Pancreas (tissue), 10 donors: ENCODE measurements at regions of chr12 and their contacts with region 1.

Region 1: DNA sequence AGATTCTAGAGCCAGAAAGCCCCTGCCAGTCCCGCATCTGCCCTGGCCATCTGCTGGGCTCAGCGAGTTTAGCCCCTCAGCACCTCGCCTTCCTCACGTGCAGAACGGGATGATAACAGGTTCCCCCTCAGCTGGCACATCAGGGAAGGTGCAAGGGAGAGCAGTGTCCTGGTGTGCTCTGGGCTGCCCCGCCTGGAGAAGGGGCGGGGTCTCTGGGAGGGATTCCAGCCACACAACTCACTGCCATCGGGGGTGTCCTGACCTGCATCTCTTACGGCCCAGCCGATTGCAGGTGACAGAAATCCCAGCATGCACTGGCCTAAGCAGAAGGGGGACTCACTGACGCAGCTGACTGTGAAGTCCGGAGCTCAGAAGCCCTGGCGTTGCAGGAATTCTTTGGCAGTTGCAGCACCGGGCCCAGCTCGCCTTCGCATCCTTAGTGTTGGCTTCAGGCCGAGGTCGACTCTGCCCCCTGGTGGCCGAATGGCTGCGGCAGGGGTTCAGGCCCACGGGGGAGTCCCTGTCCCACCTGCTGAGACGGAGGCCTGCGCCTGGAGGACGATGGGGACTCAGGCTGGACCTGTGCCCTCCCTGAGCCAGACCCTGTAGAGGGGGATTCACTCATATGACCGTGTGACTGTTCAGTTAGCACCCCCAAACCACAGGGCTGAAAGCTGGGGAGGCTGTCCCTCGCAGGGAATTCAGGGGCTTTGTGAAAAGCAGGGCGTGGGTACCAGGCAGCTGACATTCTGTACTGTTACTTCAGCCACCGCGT is 178.6 kb downstream of the ADGRD1 start:
- DNase-seq: peak in 4 of 6 donors; percentile 21 to 88 (median 64)
- ATAC-seq: peak; percentile 50 to 78 (median 72)
- H3K4me3 ChIP-seq: no peak overlapping the region
- H3K27ac ChIP-seq: no peak overlapping the region
- H3K4me1 ChIP-seq: no peaks in the 10 kb centered on the region
- H3K27me3 ChIP-seq: no peaks in the 10 kb centered on the region
- CTCF ChIP-seq: peak; percentile 51 to 65 (median 64)

Region 2: GRCh38 chr12:130920736-130921381 is 211.4 kb before region 1 on chr12:
- intact Hi-C with region 1: loop called in 1 of 3 experiments (anchors 10 kb)
- DNase-seq: no peak
- ATAC-seq: peak in 2 of 4 donors; percentile 29 to 52
- H3K4me3 ChIP-seq: no peak overlapping the region
- H3K27ac ChIP-seq: no peak overlapping the region
- H3K4me1 ChIP-seq: peaks cover 0 to 2% (median 0%) of the 10 kb centered on the region in 3 donors
- H3K27me3 ChIP-seq: peaks cover 0 to 2% (median 0%) of the 10 kb centered on the region in 4 donors
- CTCF ChIP-seq: no peak